CD4-positive, alpha-beta memory T cell (primary cell): ENCODE measurements at regions of chr15 and their contacts with region 1.

Region 1: GRCh38 chr15:92903941-92904831 is 4.1 kb downstream of the CHD2 start:
- DNase-seq: peak; percentile 99
- H3K4me3 ChIP-seq: peak overlapping the region; percentile 67 to 75
- H3K4me3 Mint-ChIP-seq: peak overlapping the region; percentile 94 to 99 (median 98)
- H3K27ac ChIP-seq: peak overlapping the region; percentile 95
- H3K27ac Mint-ChIP-seq: peak overlapping the region; percentile 98 to 100 (median 100)
- H3K4me1 ChIP-seq: peaks cover 71% of the 10 kb centered on the region
- H3K4me1 Mint-ChIP-seq: peaks cover 50 to 78% (median 63%) of the 10 kb centered on the region in 4 donors
- H3K27me3 ChIP-seq: no peaks in the 10 kb centered on the region
- H3K27me3 Mint-ChIP-seq: no peaks in the 10 kb centered on the region

Region 2: DNA sequence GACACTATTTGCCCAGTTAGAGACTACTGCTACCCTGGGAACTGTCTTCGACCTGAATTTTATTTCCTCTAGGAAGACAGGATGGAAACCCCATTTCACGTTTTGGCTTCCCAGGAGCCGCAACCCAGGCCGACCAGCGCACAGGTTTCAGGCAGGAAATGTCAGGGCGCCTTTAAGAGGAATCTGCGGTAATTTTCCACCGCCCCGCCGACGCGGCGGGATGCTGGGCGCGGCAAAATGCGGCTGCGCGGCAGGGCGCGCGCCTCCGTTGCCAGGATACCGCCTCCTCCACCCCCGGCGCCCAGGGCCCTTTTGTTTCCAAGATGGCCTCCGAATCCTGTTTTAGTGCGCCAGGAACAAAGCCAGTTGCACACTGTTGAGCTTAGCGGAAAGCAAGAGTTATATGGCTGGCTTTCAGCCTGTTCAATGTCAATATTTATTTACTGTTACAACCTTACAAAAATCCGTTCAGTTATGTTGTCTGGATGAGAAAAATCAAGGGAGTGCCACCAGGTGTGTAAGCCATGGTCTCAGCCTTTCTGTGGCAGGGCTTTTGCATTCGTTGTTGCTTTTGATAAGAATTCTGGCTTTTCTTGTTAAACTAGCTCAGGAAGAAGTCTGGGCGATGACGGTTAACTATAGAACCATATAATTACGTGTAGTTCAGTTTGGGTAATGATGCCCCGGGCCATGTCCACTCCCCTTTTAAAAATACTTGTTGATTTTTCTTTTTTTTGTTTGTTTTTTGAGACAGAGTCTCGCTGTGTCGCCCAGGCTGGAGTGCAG is 83.8 kb before region 1 on chr15:
- CTCF ChIA-PET with region 1: interaction called, 6 read pairs
- POLR2A ChIA-PET with region 1: interaction called, 136 read pairs
- intact Hi-C with region 1: no loop called
- DNase-seq: peak; percentile 87 to 89 (median 88)
- H3K4me3 ChIP-seq: peak overlapping the region; percentile 79 to 86
- H3K4me3 Mint-ChIP-seq: peak overlapping the region; percentile 74 to 93 (median 91)
- H3K27ac ChIP-seq: peak overlapping the region; percentile 74
- H3K27ac Mint-ChIP-seq: peak overlapping the region; percentile 97 to 99 (median 99)
- H3K4me1 ChIP-seq: peaks cover 67% of the 10 kb centered on the region
- H3K4me1 Mint-ChIP-seq: peaks cover 40 to 65% (median 54%) of the 10 kb centered on the region in 4 donors
- H3K27me3 ChIP-seq: no peaks in the 10 kb centered on the region
- H3K27me3 Mint-ChIP-seq: no peaks in the 10 kb centered on the region

Region 3: GRCh38 chr15:92831655-92832328 is 72.4 kb before region 1 on chr15:
- CTCF ChIA-PET with region 1: interaction called, 8 read pairs
- POLR2A ChIA-PET with region 1: interaction called, 122 read pairs
- intact Hi-C with region 1: loop called (anchors 1 kb)
- DNase-seq: peak; percentile 80 to 98 (median 89)
- H3K4me3 ChIP-seq: peak overlapping the region; percentile 27 to 34
- H3K4me3 Mint-ChIP-seq: peak overlapping the region; percentile 69 to 91 (median 80)
- H3K27ac ChIP-seq: peak overlapping the region; percentile 66
- H3K27ac Mint-ChIP-seq: peak overlapping the region; percentile 93 to 99 (median 95)
- H3K4me1 ChIP-seq: peaks cover 47% of the 10 kb centered on the region
- H3K4me1 Mint-ChIP-seq: peaks cover 29 to 44% (median 38%) of the 10 kb centered on the region in 4 donors
- H3K27me3 ChIP-seq: no peaks in the 10 kb centered on the region
- H3K27me3 Mint-ChIP-seq: peaks cover 0 to 1% of the 10 kb centered on the region in 2 donors

Region 4: DNA sequence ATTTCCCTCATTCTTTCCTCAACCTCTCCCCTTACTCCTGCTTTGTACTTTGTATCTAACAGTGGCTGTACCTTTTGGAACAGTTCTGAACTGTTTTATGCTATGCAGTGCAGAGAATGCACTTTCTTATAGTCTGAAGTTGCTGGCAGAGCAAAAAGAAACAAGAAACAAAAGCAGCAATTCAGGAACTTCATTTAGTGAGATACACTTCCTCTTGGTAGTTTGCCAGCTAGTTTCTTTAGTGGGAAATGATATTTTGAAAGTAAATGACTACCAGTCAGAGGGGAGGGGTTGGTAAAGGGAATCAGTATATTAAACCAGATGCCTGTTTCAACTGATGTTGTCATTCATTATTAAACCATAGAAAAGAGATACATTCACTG is 59.1 kb before region 1 on chr15:
- CTCF ChIA-PET with region 1: no interaction called
- POLR2A ChIA-PET with region 1: interaction called, 15 read pairs
- intact Hi-C with region 1: no loop called
- DNase-seq: peak in 4 of 5 donors; percentile 57 to 71 (median 66)
- H3K4me3 ChIP-seq: peak overlapping the region; percentile 21 to 25
- H3K4me3 Mint-ChIP-seq: peak overlapping the region; percentile 73 to 94 (median 86)
- H3K27ac ChIP-seq: peak overlapping the region; percentile 44
- H3K27ac Mint-ChIP-seq: peak overlapping the region; percentile 73 to 99 (median 98)
- H3K4me1 ChIP-seq: peaks cover 80% of the 10 kb centered on the region
- H3K4me1 Mint-ChIP-seq: peaks cover 36 to 86% (median 67%) of the 10 kb centered on the region in 4 donors
- H3K27me3 ChIP-seq: no peaks in the 10 kb centered on the region
- H3K27me3 Mint-ChIP-seq: no peaks in the 10 kb centered on the region

Region 5: DNA sequence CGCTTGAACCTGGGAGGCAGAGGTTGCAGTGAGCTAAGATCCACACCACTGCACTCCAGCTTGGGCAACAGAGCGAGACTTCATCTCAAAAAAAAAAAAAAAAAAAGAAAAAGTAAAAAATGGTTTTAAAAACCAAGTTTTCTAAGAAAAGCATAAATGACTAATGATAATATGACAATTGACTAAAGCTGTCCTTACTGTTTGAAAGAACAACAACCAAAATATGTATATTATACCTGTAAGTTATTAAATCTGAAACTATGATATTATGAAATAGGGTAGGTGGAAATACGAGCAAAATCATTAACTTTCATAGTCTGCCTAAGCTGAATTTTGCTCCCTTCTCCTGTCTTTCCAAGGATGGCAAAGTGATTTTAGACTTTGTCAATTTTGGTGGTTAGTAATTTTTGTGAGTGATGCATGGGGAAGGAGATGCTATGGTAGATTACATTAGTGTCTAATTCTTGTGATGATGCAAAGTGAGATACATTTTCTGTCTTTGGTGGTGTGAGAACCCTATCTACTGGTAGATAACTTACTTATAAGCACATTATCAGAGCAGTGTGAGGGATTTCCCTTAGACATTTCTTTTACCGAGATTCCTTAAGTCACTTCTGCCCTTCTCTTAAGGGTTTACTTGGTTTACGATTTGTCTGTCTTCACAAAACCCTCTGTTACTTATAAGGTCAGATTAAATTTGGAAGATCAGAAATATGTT is 14.6 kb before region 1 on chr15:
- CTCF ChIA-PET with region 1: interaction called, 9 read pairs
- POLR2A ChIA-PET with region 1: interaction called, 888 read pairs
- intact Hi-C with region 1: no loop called
- DNase-seq: no peak
- H3K4me3 ChIP-seq: peak overlapping the region in 1 of 2 donors; percentile 40
- H3K4me3 Mint-ChIP-seq: peak overlapping the region; percentile 56 to 88 (median 82)
- H3K27ac ChIP-seq: peak overlapping the region; percentile 17
- H3K27ac Mint-ChIP-seq: peak overlapping the region; percentile 74 to 98 (median 88)
- H3K4me1 ChIP-seq: peaks cover 92% of the 10 kb centered on the region
- H3K4me1 Mint-ChIP-seq: peaks cover 48 to 86% (median 58%) of the 10 kb centered on the region in 4 donors
- H3K27me3 ChIP-seq: no peaks in the 10 kb centered on the region
- H3K27me3 Mint-ChIP-seq: no peaks in the 10 kb centered on the region

Region 6: DNA sequence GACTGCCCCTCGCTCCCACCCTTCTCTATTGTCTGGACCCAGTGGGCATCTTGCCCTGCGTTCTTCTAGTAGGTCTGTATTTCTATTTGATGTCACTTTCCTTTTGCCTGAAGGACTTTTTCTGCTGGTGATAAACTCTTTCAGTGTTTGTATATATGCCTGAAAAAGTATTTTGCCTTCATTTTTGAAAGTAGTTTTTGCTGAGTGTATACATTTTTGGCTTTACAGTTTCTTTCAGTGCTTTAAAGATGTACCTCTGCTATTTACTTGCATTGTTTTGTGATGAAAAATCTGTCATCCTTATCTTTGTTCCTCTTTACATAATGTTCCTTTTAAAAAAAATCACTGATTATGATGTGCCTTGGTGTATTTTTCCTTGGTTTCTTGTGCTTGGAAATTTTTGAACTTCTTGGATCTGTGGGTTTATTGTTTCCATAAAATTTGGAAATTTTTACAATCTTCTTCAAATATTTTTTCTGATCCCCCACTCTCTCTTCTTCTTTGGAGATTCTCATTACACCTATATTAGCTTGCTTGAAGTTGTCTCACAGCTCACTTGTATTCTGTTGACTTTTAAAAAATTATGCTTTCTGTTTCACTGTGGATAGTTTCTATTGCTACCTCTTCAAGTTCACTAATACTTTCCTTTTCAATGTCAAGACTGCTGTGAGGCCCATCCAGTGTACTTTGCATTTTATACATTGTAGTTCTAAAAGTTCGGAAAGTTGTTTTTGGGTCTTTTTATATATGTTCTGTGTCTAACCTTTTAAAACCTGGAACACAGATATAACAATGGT is 117.0 kb after region 1 on chr15:
- CTCF ChIA-PET with region 1: no interaction called
- POLR2A ChIA-PET with region 1: no interaction called
- intact Hi-C with region 1: no loop called
- DNase-seq: no peak
- H3K4me3 ChIP-seq: no peak overlapping the region
- H3K4me3 Mint-ChIP-seq: peak overlapping the region in 3 of 8 donors; percentile 17 to 41 (median 22)
- H3K27ac ChIP-seq: no peak overlapping the region
- H3K27ac Mint-ChIP-seq: peak overlapping the region in 6 of 7 donors; percentile 49 to 91 (median 72)
- H3K4me1 ChIP-seq: peaks cover 42% of the 10 kb centered on the region
- H3K4me1 Mint-ChIP-seq: peaks cover 46 to 83% (median 64%) of the 10 kb centered on the region in 4 donors
- H3K27me3 ChIP-seq: no peaks in the 10 kb centered on the region
- H3K27me3 Mint-ChIP-seq: no peaks in the 10 kb centered on the region